ENCODE measurements at regions of chr15 and their contacts with region 1.

Region 1: DNA sequence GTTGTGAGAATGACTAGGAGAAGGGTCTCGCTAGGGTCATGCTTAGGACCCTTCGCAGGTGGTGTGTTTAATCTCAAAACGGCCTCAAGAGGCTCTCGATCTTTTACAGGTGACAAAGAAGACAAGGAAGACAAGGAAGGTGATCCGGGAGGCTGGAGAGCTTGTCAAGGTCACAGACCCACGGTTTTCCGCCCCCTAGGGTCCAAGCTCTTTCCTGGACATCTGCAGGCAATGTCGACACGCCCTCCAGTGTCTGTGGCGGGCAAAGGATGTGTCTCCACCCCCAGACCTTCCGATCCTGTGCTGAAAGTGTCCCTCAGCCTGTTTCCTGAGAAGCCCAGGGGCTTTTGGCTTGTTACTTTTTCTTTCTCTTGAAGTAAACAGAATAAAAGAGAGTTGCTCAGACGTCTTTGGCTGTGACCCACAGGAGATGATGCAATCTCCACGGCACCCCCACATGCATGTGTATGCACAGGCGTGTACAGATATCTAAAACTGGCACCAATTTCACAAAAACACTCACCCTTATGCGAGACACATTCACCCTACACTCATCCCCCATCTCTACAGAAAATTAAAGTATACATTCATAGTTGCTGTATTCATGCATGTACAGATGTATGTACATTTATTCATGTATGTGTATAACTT is 108.8 kb downstream of the KLF13 start:
- DNase-seq: peak; percentile 55 to 81 (median 76)
- ATAC-seq: peak; percentile 74 to 94 (median 88)
- H3K4me3 ChIP-seq: peak overlapping the region in 1 of 4 donors; percentile 23
- H3K27ac ChIP-seq: peak overlapping the region in 3 of 4 donors; percentile 31 to 68 (median 63)
- H3K4me1 ChIP-seq: peaks cover 0 to 6% (median 6%) of the 10 kb centered on the region in 3 donors
- H3K27me3 ChIP-seq: no peaks in the 10 kb centered on the region
- CTCF ChIP-seq: peak; percentile 13 to 80 (median 45)

Region 2: GRCh38 chr15:31215490-31216214 is 219.7 kb before region 1 on chr15:
- intact Hi-C with region 1: loop called in 1 of 3 experiments (anchors 5 kb)
- DNase-seq: peak; percentile 71 to 94 (median 78)
- ATAC-seq: peak; percentile 91 to 93 (median 92)
- H3K4me3 ChIP-seq: peak overlapping the region; percentile 40 to 75 (median 50)
- H3K27ac ChIP-seq: peak overlapping the region; percentile 62 to 93 (median 84)
- H3K4me1 ChIP-seq: peaks cover 0 to 6% (median 5%) of the 10 kb centered on the region in 3 donors
- H3K27me3 ChIP-seq: no peaks in the 10 kb centered on the region
- CTCF ChIP-seq: peak; percentile 51 to 88 (median 84)

Region 3: GRCh38 chr15:31483053-31483985 is 47.9 kb after region 1 on chr15:
- intact Hi-C with region 1: loop called in 1 of 3 experiments (anchors 5 kb)
- DNase-seq: no peak
- ATAC-seq: no peak
- H3K4me3 ChIP-seq: peak overlapping the region in 1 of 4 donors; percentile 10
- H3K27ac ChIP-seq: no peak overlapping the region
- H3K4me1 ChIP-seq: peaks cover 0 to 6% (median 6%) of the 10 kb centered on the region in 3 donors
- H3K27me3 ChIP-seq: no peaks in the 10 kb centered on the region
- CTCF ChIP-seq: no peak

Measured in pancreas (tissue), 10 donors.